ENCODE measurements at regions of chr7 and their contacts with region 1.

Region 1: DNA sequence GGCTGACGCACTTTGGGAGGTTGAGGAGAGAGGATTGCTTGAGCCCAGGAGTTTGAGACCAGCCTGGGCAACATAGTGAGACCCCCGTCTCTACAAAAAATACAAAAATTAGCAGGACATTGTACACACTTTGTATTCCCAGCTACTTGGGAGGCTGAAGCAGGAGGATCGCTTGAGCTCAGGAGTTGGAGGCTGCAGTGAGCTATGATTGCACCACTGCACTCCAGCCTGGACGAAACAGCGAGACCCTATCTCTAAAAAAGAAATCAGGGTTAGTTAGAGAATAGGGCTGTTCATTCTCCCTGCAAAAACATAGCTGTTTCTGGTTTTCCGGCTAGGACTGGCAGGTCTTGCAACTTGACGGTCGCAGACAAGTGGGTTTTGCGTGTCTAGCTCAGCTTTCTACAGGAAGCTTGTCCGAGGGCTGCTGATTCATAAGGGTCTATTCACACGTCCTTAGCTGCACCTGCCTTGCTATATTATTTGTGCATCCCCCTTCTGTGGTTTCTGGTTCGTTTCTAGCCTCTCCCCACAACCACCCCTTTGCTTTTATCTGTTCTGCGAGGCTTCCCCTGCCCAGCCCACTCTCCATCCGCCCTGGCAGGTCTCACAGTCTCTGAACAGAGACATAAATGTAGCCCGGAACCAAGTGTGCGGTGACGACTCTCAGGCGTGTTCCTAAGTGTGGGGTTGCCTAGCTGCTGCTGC is 10.7 kb downstream of the AMZ1 start:
- DNase-seq: peak; percentile 94 to 99 (median 99)
- H3K4me3 ChIP-seq: peak overlapping the region in 2 of 7 experiments; percentile 14 to 42
- H3K27ac ChIP-seq: peak overlapping the region; percentile 77 to 86
- H3K4me1 ChIP-seq: peaks cover 0 to 58% (median 30%) of the 10 kb centered on the region in 4 experiments
- H3K27me3 ChIP-seq: no peaks in the 10 kb centered on the region

Region 2: DNA sequence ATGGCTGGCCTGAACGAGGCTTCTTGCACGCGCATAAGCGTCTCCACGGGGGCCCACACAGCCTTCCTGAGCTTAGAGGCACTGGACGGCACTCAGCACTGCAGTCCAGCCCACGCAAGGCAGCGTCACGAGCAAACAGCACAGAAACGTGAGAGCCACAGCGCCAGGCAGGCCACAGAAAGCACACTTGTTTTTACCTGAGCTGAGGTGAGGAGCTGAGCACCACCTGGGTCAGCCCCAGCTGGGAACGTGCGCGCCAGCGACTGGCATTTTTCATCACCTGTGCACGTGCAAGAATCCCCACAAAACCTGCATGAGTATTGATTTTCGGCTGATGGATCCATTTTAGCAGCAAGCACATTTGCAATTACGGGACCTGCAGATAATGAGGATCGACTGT is 113.3 kb before region 1 on chr7:
- CTCF ChIA-PET with region 1: no interaction called
- POLR2A ChIA-PET with region 1: no interaction called
- DNase-seq: no peak
- H3K4me3 ChIP-seq: no peak overlapping the region
- H3K27ac ChIP-seq: no peak overlapping the region
- H3K4me1 ChIP-seq: no peaks in the 10 kb centered on the region
- H3K27me3 ChIP-seq: no peaks in the 10 kb centered on the region

Region 3: DNA sequence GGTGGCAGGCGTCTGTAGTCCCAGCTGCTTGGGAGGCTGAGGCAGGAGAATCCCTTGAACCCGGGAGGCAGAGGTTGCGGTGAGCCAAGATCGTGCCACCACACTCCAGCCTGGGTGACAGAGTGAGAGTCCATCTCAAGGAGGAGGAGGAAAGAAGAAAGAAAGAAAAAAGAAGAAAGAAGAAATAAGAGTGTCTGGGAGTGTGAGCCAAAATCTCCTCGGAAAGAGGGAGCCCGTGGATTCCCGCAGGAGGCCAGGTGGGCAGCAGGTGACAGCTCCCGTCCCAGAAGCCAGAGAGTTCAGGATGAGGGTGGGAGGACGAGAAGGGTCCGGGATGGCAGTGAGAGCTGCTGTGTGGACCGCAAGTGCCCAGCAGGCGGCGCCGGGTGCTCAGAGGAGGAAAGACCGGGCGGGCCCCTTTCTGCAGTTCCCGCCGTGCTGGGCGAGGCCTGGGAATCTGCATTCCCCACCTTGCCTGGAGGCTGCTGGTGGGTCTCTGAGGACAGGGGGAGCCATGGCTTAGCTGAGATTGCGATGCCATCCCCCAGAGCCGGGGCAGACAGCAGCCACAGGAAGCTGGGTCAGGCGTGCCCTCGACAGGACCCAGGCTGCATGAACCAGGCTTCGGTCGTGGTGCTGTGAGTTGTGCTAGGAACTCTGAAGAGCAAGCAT is 27.9 kb before region 1 on chr7:
- CTCF ChIA-PET with region 1: interaction called, 18 read pairs
- POLR2A ChIA-PET with region 1: no interaction called
- DNase-seq: peak; percentile 65 to 75 (median 71)
- H3K4me3 ChIP-seq: no peak overlapping the region
- H3K27ac ChIP-seq: no peak overlapping the region
- H3K4me1 ChIP-seq: peaks cover 0 to 6% (median 4%) of the 10 kb centered on the region in 4 experiments
- H3K27me3 ChIP-seq: no peaks in the 10 kb centered on the region

Region 4: GRCh38 chr7:2680792-2681490 is 17.8 kb before region 1 on chr7:
- CTCF ChIA-PET with region 1: interaction called, 12 read pairs
- POLR2A ChIA-PET with region 1: no interaction called
- DNase-seq: peak; percentile 49 to 67 (median 60)
- H3K4me3 ChIP-seq: no peak overlapping the region
- H3K27ac ChIP-seq: no peak overlapping the region
- H3K4me1 ChIP-seq: peaks cover 0 to 4% (median 1%) of the 10 kb centered on the region in 4 experiments
- H3K27me3 ChIP-seq: peaks cover 0 to 2% (median 0%) of the 10 kb centered on the region in 5 experiments

Region 5: GRCh38 chr7:2688409-2689331 is 10.1 kb before region 1 on chr7:
- CTCF ChIA-PET with region 1: interaction called, 17 read pairs
- POLR2A ChIA-PET with region 1: interaction called, 5 read pairs
- DNase-seq: peak in 2 of 3 donors; percentile 37 to 52
- H3K4me3 ChIP-seq: peak overlapping the region in 6 of 7 experiments; percentile 10 to 61 (median 44)
- H3K27ac ChIP-seq: no peak overlapping the region
- H3K4me1 ChIP-seq: peaks cover 0 to 38% (median 27%) of the 10 kb centered on the region in 4 experiments
- H3K27me3 ChIP-seq: peaks cover 0 to 44% (median 16%) of the 10 kb centered on the region in 5 experiments

Region 6: DNA sequence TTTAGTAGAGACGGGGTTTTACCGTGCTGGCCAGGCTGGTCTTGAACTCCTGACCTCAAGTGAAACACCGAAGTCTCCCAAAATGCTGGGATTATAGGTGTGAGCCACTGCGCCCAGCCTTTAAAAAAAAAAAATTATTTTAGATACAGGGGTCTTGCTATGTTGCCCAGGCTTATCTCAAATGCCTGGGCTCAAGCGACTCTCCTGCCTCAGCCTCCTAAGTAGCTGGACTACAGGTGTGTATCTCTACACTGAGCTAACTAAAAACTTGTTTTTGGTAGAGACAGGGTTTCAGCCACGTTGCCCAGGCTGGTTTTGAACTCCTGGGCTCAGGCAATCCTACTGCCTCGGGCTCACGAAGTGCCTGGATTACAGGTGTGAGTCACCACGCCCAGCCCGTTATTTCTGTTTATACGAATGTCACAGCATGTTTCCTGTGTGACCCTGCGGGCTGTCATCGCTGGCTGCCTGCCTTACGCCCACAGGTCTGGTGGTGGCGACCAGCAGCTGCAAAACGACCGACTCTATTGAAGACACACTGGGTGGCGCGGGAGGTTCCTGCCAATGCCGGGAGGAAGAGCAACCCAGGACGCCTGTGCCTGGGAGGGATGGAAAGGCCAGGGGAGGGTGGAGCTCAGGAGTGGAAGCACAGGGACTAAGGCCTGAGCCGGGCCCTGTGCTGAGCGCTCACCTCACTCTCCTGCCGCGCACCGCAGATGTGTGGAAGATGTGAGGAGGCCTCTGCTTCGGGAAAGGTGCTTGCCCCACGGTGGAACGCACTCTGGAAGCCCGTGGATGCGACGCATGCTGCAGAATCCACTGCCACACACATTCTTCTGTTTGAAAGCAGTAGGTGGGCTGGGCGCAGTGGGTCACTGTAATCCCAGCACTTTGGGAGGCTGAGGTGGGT is 22.1 kb after region 1 on chr7:
- CTCF ChIA-PET with region 1: interaction called, 27 read pairs
- POLR2A ChIA-PET with region 1: interaction called, 5 read pairs
- DNase-seq: peak; percentile 85 to 89 (median 86)
- H3K4me3 ChIP-seq: peak overlapping the region in 1 of 7 experiments; percentile 9
- H3K27ac ChIP-seq: peak overlapping the region in 1 of 2 experiments; percentile 43
- H3K4me1 ChIP-seq: peaks cover 4 to 65% (median 58%) of the 10 kb centered on the region in 4 experiments
- H3K27me3 ChIP-seq: no peaks in the 10 kb centered on the region

Region 7: GRCh38 chr7:2732959-2733584 is 34.3 kb after region 1 on chr7:
- CTCF ChIA-PET with region 1: interaction called, 4 read pairs
- POLR2A ChIA-PET with region 1: interaction called, 15 read pairs
- DNase-seq: peak in 2 of 3 donors; percentile 48 to 60
- H3K4me3 ChIP-seq: peak overlapping the region in 2 of 7 experiments; percentile 27 to 32
- H3K27ac ChIP-seq: peak overlapping the region; percentile 98 to 99
- H3K4me1 ChIP-seq: peaks cover 17 to 100% (median 89%) of the 10 kb centered on the region in 4 experiments
- H3K27me3 ChIP-seq: no peaks in the 10 kb centered on the region